Ovary (tissue), 10 donors: ENCODE measurements at regions of chr5 and their contacts with region 1.

Region 1: GRCh38 chr5:64147849-64148441 is 17.7 kb upstream of the RNF180 start:
- DNase-seq: peak; percentile 55 to 79 (median 76)
- H3K4me3 ChIP-seq: no peak overlapping the region
- H3K27ac ChIP-seq: no peak overlapping the region
- H3K4me1 ChIP-seq: peaks cover 3% of the 10 kb centered on the region
- H3K27me3 ChIP-seq: no peaks in the 10 kb centered on the region
- CTCF ChIP-seq: peak; percentile 66 to 76 (median 73)
- EP300 ChIP-seq: no peak
- POLR2A ChIP-seq: no peak

Region 2: GRCh38 chr5:64003966-64004365 is 144.0 kb before region 1 on chr5:
- intact Hi-C with region 1: no loop called
- DNase-seq: no peak
- H3K4me3 ChIP-seq: no peak overlapping the region
- H3K27ac ChIP-seq: no peak overlapping the region
- H3K4me1 ChIP-seq: no peaks in the 10 kb centered on the region
- H3K27me3 ChIP-seq: no peaks in the 10 kb centered on the region
- CTCF ChIP-seq: no peak
- EP300 ChIP-seq: no peak
- POLR2A ChIP-seq: no peak

Region 3: GRCh38 chr5:64207978-64208377 is 60.0 kb after region 1 on chr5:
- intact Hi-C with region 1: loop called in 2 of 4 experiments (anchors 5 kb)
- DNase-seq: no peak
- H3K4me3 ChIP-seq: no peak overlapping the region
- H3K27ac ChIP-seq: no peak overlapping the region
- H3K4me1 ChIP-seq: no peaks in the 10 kb centered on the region
- H3K27me3 ChIP-seq: no peaks in the 10 kb centered on the region
- CTCF ChIP-seq: peak in 2 of 3 donors; percentile 17 to 28
- EP300 ChIP-seq: no peak
- POLR2A ChIP-seq: no peak

Region 4: DNA sequence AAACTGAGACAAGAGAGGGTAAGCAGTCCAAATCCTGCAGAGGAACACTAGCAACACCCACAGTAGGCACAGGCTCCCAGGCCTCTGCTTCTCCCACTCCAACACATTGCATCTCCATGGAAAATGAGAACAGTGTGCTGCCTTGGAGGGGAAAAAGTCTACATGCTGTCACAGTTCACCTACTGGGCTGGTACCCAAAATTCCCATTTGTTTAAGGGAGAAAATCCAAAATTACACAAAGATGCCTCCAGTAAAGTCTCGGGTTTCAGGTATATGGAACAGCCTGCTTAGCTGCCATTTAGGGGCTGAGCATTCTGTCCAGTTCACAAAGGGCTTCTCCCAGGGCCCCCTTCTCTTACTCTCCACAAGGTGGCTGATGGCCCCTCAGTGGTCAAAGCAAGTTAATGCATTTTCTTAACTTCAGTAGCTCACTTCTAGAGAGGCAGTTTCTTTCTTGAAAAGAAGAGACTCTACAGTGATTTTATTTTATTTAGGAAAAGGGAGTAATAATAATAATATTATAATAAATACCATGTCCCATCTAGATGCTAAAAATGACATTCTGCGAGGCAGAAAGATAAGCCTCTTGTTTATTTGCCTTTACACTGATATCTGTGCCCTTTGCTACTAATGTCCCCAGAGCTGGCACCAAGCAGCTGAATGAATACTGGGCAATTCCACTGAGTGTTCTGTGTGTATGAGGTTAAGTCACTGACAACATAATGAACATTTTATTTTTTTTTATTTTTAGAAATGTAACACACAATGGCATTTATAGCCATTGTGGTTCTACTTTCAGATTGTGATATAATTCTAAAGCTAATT is 447.3 kb after region 1 on chr5:
- intact Hi-C with region 1: loop called in 1 of 4 experiments (anchors 10 kb)
- DNase-seq: peak in 3 of 5 donors; percentile 16 to 39 (median 18)
- H3K4me3 ChIP-seq: no peak overlapping the region
- H3K27ac ChIP-seq: no peak overlapping the region
- H3K4me1 ChIP-seq: peaks cover 1% of the 10 kb centered on the region
- H3K27me3 ChIP-seq: no peaks in the 10 kb centered on the region
- CTCF ChIP-seq: peak in 1 of 3 donors; percentile 22
- EP300 ChIP-seq: no peak
- POLR2A ChIP-seq: no peak

Region 5: DNA sequence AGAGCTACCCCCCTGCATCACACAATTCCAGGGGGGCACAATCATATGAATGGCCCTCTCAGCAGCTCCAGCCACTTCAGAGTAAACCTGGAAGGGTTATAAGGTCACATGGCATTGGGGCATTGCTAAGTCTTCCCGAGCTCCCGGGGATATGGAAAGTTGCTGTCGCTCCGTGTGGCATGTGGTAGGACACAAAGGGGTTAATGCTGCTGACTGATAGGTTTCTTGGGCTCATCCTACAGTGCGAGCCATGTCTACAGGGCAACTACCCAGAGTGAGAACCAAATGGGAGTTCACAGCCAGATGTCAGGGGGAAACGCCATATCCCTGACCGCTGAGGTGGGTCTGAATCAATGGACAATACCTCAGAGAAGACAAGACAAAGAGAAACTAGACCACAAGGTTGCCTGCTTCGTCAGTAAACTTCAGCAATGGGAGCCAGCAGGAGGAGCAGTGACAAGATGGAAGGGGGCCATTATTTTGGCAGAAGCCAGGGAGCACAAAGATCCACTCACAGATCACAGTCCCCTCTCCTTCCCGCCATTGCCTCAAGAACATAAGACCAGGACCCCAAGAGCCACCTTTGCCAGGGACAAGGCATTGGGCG is 490.0 kb after region 1 on chr5:
- intact Hi-C with region 1: no loop called
- DNase-seq: no peak
- H3K4me3 ChIP-seq: no peak overlapping the region
- H3K27ac ChIP-seq: no peak overlapping the region
- H3K4me1 ChIP-seq: no peaks in the 10 kb centered on the region
- H3K27me3 ChIP-seq: no peaks in the 10 kb centered on the region
- CTCF ChIP-seq: no peak
- EP300 ChIP-seq: no peak
- POLR2A ChIP-seq: no peak